Endothelial cell of umbilical vein (primary cell): ENCODE measurements at regions of chr11 and their contacts with region 1.

Region 1: GRCh38 chr11:25065724-25066123 is 568.9 kb downstream of the LUZP2 start:
- DNase-seq: peak; percentile 1
- H3K4me3 ChIP-seq: no peak overlapping the region
- H3K27ac ChIP-seq: no peak overlapping the region
- H3K4me1 ChIP-seq: no peaks in the 10 kb centered on the region
- H3K27me3 ChIP-seq: no peaks in the 10 kb centered on the region
- CTCF ChIP-seq: no peak
- POLR2A ChIP-seq: no peak

Region 2: GRCh38 chr11:25052844-25053243 is 12.9 kb before region 1 on chr11:
- CTCF ChIA-PET with region 1: interaction called, 3 read pairs
- POLR2A ChIA-PET with region 1: no interaction called
- dilution Hi-C with region 1: no loop called
- intact Hi-C with region 1: loop called (anchors 1 kb)
- DNase-seq: no peak
- H3K4me3 ChIP-seq: no peak overlapping the region
- H3K27ac ChIP-seq: no peak overlapping the region
- H3K4me1 ChIP-seq: no peaks in the 10 kb centered on the region
- H3K27me3 ChIP-seq: no peaks in the 10 kb centered on the region
- CTCF ChIP-seq: no peak
- POLR2A ChIP-seq: no peak

Region 3: DNA sequence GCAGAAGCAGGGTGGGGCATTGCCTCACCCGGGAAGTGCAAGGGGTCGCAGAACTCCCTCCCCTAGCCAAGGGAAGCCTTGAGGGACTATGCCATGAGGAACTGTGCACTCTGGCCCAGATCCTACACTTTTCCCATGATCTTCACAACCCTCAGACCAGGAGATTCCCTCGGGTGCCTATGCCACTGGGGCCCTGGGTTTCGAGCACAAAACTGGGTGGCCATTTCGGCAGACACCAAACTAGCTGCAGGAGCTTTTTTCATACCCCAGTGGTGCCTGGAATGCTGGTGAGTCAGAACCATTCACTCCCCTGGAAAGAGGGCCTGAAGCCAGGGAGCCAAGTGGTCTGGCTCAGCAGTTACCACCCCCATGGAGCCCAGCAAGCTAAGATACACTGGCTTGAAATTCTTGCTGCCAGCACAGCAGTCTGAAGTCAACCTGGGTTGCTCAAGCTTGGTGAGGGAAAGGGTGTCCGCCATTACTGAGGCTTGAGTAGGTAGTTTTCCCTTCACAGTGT is 692.5 kb after region 1 on chr11:
- CTCF ChIA-PET with region 1: no interaction called
- POLR2A ChIA-PET with region 1: no interaction called
- dilution Hi-C with region 1: no loop called
- intact Hi-C with region 1: no loop called
- DNase-seq: no peak
- H3K4me3 ChIP-seq: no peak overlapping the region
- H3K27ac ChIP-seq: no peak overlapping the region
- H3K4me1 ChIP-seq: no peaks in the 10 kb centered on the region
- H3K27me3 ChIP-seq: no peaks in the 10 kb centered on the region
- CTCF ChIP-seq: no peak
- POLR2A ChIP-seq: no peak